ENCODE measurements at regions of chr13 and their contacts with region 1.

Region 1: GRCh38 chr13:39616087-39616694 is 13.2 kb upstream of the LHFPL6 start:
- DNase-seq: peak; percentile 50
- ATAC-seq: peak; percentile 86
- H3K4me3 Mint-ChIP-seq: no peak overlapping the region
- H3K27ac Mint-ChIP-seq: no peak overlapping the region
- H3K4me1 Mint-ChIP-seq: no peaks in the 10 kb centered on the region
- H3K27me3 Mint-ChIP-seq: peaks cover 2% of the 10 kb centered on the region
- CTCF ChIP-seq: peak; percentile 92

Region 2: GRCh38 chr13:39051157-39051556 is 565.0 kb before region 1 on chr13:
- CTCF ChIA-PET with region 1: interaction called, 15 read pairs
- POLR2A ChIA-PET with region 1: no interaction called
- intact Hi-C with region 1: loop called (anchors 5 kb)
- DNase-seq: no peak
- ATAC-seq: no peak
- H3K4me3 Mint-ChIP-seq: no peak overlapping the region
- H3K27ac Mint-ChIP-seq: no peak overlapping the region
- H3K4me1 Mint-ChIP-seq: peaks cover 6% of the 10 kb centered on the region
- H3K27me3 Mint-ChIP-seq: no peaks in the 10 kb centered on the region
- CTCF ChIP-seq: peak; percentile 47

Region 3: DNA sequence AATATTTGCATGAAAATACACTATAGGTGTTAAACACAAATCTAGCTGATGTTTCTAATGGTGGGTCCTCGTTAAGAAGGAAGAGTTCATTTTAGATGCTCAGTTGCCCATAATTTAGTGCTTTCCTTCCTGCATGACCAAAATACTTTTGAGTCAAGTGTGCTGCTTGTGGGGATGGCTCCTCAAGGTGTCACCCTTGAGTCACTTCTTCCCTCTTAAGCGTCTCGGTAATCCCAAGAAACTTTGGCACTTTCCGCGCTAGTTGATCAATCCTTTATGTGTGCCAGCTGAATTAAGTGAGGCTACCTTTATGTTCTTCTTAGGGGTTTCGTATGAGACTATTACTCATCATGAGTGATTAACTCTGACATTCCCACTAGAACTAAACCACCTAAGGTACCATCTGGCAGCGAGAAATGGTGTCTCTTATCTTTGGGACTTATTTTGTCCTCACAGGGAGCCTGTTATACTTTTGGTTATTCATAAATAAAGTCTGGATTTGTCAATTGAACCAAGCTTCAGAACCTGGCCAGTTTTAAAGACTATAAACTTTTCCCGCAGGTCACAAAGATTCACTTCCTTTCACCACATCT is 471.2 kb before region 1 on chr13:
- CTCF ChIA-PET with region 1: interaction called, 15 read pairs
- POLR2A ChIA-PET with region 1: no interaction called
- intact Hi-C with region 1: loop called (anchors 10 kb)
- DNase-seq: peak; percentile 50
- ATAC-seq: peak; percentile 60
- H3K4me3 Mint-ChIP-seq: no peak overlapping the region
- H3K27ac Mint-ChIP-seq: no peak overlapping the region
- H3K4me1 Mint-ChIP-seq: peaks cover 11% of the 10 kb centered on the region
- H3K27me3 Mint-ChIP-seq: peaks cover 33% of the 10 kb centered on the region
- CTCF ChIP-seq: peak; percentile 52

Region 4: DNA sequence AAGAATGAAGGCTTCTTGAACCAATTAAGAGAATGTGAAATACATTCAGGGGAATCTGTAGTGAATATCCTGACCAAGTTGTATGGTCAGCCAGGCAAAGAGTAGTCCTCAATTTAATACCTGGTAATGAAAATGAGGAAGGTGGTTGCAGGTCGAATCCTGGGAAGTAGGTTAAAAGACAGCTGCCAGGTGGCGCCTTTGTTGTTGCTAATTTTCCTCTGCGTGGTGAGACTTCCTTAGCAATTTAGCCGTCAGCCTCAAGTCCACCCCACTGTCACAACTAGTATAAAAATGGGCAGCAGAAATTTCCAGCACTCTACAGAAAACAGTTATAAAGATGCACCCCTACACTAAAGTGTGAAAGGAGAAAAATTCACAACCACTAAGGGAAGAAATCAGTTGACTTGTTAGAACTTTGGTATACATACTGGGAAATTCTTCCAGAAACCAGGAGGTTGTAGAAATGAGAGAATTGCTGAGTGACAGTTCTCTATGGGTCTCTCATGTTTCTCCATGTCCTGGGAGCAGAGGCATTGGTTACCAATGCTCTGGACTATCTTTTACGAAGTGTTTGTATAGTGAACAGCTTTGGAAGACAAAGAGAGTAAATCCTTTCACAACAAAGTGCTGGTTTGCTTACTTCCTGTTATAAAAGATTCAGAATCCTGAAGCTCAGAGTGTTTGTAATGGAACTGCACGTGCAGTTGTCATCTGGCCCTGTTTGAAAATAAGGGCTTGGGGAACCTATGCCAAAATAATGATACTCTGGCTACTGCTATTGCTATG is 342.0 kb before region 1 on chr13:
- CTCF ChIA-PET with region 1: interaction called, 4 read pairs
- POLR2A ChIA-PET with region 1: no interaction called
- intact Hi-C with region 1: loop called (anchors 10 kb)
- DNase-seq: peak; percentile 4
- ATAC-seq: no peak
- H3K4me3 Mint-ChIP-seq: no peak overlapping the region
- H3K27ac Mint-ChIP-seq: no peak overlapping the region
- H3K4me1 Mint-ChIP-seq: no peaks in the 10 kb centered on the region
- H3K27me3 Mint-ChIP-seq: peaks cover 10% of the 10 kb centered on the region
- CTCF ChIP-seq: no peak

Region 5: DNA sequence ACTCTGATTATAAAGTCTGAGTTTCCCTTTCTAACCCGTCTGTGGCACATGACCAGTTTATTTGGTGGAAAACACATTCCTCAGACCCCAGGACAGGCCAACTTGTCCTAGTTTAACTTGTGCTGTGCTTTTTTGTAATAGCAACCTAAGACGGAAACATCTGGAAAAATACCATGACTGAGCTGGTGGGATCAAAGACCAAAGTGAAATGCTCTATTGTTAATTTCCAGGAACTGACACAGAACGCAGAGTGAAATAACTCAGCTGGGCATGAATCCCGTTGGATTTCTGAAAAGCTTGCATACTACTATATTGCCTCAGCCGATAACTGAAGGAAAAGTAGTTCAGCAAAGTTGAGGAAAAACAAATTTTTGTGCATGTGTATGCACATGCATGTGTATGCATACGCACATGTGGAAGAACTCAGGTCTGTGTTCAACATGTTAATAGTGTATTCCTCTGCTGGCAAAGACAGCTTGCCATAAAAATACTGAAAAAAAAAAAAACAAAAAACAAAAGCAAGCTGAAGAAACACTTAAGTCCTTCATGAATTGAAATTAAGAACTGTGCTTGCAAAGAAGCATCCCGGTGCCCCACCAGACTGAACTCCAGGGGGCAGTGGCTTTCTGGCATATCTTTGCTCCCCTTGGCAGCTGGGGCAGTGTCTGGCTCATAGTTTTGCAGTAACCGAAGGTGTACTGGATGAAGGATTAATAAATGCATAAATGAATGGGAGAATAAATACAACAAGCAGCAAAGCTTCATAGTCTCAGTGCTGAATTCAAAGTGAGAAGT is 201.0 kb before region 1 on chr13:
- CTCF ChIA-PET with region 1: interaction called, 14 read pairs
- POLR2A ChIA-PET with region 1: no interaction called
- intact Hi-C with region 1: no loop called
- DNase-seq: peak; percentile 20
- ATAC-seq: no peak
- H3K4me3 Mint-ChIP-seq: no peak overlapping the region
- H3K27ac Mint-ChIP-seq: no peak overlapping the region
- H3K4me1 Mint-ChIP-seq: no peaks in the 10 kb centered on the region
- H3K27me3 Mint-ChIP-seq: peaks cover 13% of the 10 kb centered on the region
- CTCF ChIP-seq: no peak

Region 6: DNA sequence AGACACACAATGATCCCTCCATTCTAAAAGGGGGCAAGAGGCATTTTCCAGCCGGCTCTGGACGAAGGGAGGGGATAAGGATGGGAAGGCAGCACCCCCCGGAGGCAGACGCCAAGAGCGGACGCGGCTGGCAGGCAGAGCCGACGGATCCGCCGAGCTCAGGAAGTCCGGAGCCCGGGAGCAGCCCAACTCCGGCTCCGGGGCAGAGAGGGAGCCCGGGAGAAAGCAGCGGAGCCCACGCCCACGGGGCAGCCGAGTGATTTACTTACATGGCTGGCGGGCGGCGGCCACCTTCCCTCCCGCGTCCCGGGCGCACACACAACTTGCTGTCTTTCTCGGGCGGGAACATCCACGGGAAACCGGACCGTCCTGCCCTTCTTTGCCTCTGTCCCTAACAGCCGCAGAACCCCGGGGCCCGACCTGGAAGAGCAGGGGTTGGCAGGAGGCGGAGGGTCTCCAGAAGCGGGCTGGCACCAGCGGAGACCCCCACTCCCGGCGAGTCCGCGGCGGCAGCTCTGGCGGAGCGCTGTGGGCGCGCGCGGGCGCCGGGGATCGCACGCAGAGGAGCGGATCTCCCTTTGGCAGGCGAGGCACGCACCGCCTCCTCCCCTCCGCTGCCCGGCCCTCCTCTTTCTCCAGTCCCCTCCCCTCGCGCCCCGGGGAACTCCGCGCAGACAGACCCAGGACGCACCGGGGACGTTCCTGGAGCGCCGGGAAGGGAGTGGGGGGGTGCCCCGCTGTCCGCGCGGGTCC is 13.4 kb before region 1 on chr13 and contains the start of gene LHFPL6:
- CTCF ChIA-PET with region 1: interaction called, 31 read pairs
- POLR2A ChIA-PET with region 1: no interaction called
- intact Hi-C with region 1: no loop called
- DNase-seq: peak; percentile 77
- ATAC-seq: peak; percentile 97
- H3K4me3 Mint-ChIP-seq: peak within 1 kb of the TSS; percentile 70
- H3K27ac Mint-ChIP-seq: peak within 1 kb of the TSS; percentile 20
- H3K4me1 Mint-ChIP-seq: peaks cover 9% of the 10 kb centered on the region
- H3K27me3 Mint-ChIP-seq: peaks cover 46% of the 10 kb centered on the region
- CTCF ChIP-seq: no peak
- total RNA-seq, gene LHFPL6: 0.60 to 0.74 TPM

Region 7: DNA sequence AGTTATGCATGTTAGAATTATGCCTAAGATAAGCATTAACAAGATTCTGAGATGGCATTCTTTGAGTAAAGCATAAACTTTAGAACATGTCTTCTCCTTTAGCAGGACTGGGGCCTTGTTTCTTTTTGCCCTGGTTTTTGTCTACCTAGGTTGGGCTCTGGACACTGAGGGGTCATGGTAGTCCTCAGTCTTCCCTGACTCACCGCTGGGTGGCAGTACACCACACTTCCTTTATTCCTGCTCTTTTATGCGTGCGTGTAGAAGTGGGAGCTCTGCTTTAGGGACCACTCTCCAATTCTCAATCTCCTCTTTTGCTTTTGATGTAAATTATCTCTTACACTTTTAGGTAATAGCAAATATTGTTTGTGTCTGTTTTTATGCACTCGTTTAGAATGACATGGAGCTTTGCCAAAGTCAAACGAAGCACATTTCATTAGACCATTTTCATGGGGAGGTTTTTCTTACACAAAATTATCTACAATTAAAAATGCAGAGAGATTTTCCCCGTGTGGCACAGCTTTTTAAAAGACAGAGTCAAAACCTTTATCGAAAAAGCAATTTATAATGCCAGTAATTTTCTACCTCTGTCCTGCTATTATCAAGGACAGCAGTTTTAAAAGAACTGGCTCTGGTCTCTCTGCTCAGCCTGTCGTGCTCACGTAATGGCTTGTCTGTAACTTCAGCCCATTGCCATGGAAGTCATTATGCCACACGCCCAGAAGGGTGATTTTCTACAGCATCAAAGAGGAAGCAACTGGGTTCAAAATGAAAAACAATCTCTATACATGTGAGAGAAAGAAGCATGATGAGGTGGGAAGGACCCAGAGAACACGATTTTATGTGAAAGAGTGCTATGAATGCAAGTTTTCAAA is 453.2 kb after region 1 on chr13:
- CTCF ChIA-PET with region 1: no interaction called
- POLR2A ChIA-PET with region 1: no interaction called
- intact Hi-C with region 1: no loop called
- DNase-seq: peak; percentile 81
- ATAC-seq: peak; percentile 87
- H3K4me3 Mint-ChIP-seq: no peak overlapping the region
- H3K27ac Mint-ChIP-seq: peak overlapping the region; percentile 66
- H3K4me1 Mint-ChIP-seq: peaks cover 25% of the 10 kb centered on the region
- H3K27me3 Mint-ChIP-seq: no peaks in the 10 kb centered on the region
- CTCF ChIP-seq: peak; percentile 78